Common myeloid progenitor, CD34-positive (primary cell): ENCODE measurements at regions of chr4 and their contacts with region 1.

Region 1: GRCh38 chr4:2761035-2761923 is 5.1 kb upstream of the TNIP2 start:
- DNase-seq: peak; percentile 38 to 89 (median 88)
- H3K4me3 ChIP-seq: no peak overlapping the region
- H3K27ac ChIP-seq: no peak overlapping the region
- H3K4me1 ChIP-seq: peaks cover 0 to 30% (median 22%) of the 10 kb centered on the region in 4 experiments
- H3K27me3 ChIP-seq: no peaks in the 10 kb centered on the region

Region 2: DNA sequence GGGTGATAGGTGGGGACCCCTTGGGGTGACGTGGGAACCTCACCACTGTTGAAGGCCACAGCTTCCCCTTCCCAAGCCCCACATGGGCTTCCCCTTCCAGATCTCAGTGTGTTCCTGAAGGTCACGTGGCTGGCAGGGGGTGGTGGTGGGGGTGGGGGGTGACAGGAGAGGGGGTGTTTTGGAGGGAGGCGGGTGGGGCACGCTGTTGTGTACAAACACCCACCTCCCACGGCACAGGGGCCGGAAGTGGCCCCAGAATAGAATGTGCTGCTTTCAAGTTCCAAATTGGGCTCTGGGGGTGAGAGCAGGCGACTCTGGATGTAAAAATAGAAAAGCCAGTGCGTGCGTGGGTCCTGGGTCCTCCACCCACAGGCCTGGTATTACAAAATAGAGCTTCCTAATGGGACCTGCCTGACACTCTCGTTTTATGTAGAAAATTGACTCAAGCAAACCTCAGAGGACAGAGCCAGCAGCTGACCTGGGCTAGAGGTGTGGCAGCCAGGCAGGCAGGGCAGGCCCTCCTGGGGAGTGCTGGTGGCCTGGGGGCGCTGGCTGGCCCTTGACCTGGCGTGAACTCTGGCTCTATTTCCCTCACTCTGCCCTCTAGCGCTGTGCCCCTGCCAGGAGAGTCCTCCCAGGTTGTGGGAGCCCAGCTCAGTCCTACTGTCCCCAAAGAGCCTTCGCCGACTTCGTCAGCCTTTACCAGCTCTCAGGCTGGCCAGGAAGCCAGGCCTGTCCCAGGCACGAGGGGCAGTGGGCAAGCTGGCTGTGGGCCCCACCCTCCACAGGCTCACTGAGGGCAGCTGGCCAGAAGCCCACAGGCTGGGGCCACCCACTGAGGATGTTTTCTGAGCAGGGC is 26.2 kb after region 1 on chr4:
- CTCF ChIA-PET with region 1: interaction called, 23 read pairs
- POLR2A ChIA-PET with region 1: interaction called, 4 read pairs
- DNase-seq: peak; percentile 68 to 94 (median 94)
- H3K4me3 ChIP-seq: peak overlapping the region in 3 of 7 experiments; percentile 4 to 36 (median 11)
- H3K27ac ChIP-seq: peak overlapping the region; percentile 44 to 73
- H3K4me1 ChIP-seq: peaks cover 0 to 65% (median 52%) of the 10 kb centered on the region in 4 experiments
- H3K27me3 ChIP-seq: no peaks in the 10 kb centered on the region

Region 3: GRCh38 chr4:2800691-2801596 is 39.7 kb after region 1 on chr4:
- CTCF ChIA-PET with region 1: interaction called, 10 read pairs
- POLR2A ChIA-PET with region 1: no interaction called
- DNase-seq: peak; percentile 63 to 86 (median 82)
- H3K4me3 ChIP-seq: peak overlapping the region in 5 of 7 experiments; percentile 15 to 42 (median 26)
- H3K27ac ChIP-seq: peak overlapping the region in 1 of 2 experiments; percentile 73
- H3K4me1 ChIP-seq: peaks cover 5 to 98% (median 89%) of the 10 kb centered on the region in 4 experiments
- H3K27me3 ChIP-seq: no peaks in the 10 kb centered on the region

Region 4: DNA sequence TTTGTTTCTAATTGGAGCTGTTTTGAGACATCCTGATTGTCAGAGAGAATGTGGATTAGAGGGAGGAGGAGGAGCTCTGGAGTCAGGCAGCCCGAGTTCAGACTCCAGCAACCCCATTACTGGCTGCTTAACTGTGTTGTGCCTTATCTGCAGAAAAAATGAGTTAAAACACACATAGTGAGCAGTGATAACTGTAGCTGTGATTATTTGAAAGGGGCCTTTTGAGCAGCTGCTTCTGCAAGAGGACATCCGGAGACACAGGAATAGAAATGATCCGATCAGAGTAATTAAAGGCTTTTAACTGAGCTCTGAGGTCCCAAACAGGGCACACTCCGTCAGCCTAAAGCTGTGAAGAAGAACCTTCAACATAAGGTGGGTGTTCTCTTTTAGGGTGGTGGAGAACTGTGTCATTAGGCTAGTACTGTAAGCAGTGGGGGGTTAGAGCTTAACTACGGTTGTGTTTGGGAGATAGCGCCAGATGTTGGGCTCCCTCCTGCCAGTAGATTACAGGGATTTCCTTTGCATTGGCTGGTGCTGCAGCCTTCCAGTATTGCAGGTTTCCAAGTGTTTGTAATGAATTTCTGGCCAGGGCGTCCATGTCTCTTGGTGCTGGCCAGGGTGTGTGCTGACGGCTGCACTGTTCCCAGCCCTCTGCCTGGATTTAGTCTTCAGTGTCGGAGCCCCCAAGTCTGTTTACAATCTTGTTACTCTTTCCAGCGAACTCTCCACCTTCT is 106.6 kb after region 1 on chr4:
- CTCF ChIA-PET with region 1: interaction called, 14 read pairs
- POLR2A ChIA-PET with region 1: interaction called, 3 read pairs
- DNase-seq: peak in 2 of 3 donors; percentile 69 to 84
- H3K4me3 ChIP-seq: peak overlapping the region in 2 of 7 experiments; percentile 22 to 30
- H3K27ac ChIP-seq: no peak overlapping the region
- H3K4me1 ChIP-seq: peaks cover 31 to 50% (median 38%) of the 10 kb centered on the region in 4 experiments
- H3K27me3 ChIP-seq: no peaks in the 10 kb centered on the region